Sigmoid colon (tissue), 7 donors: ENCODE measurements at regions of chr21 and their contacts with region 1.

Region 1: DNA sequence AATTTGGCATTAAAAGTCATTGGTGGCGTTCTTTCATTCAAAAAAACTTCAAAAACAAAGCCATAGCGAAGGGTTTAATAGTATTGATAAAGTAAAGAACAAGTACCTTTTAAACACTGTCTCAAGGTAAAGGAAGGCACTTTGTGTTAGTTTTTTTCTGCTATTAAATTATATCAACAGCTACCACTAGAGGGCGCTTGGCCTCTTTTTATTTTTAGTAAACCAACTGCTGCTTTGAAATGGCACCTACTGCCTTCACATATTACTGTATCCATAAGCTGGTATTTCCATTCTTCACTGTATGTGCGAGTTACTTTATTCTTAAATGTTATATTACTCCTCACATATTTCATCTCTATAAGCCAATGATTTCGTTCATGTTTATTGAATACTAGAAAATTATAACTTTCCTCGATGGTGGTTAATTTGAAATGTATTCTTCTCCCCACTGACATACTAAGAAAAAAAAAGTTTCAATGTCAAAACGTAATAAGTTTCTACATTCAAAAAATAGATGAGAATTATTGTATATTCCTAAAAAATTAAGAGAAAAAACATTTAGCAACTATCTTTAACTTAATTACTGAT is 125.7 kb upstream of the CXADR start:
- DNase-seq: no peak
- H3K4me3 ChIP-seq: no peak overlapping the region
- H3K27ac ChIP-seq: no peak overlapping the region
- H3K4me1 ChIP-seq: no peaks in the 10 kb centered on the region
- H3K27me3 ChIP-seq: peaks cover 0 to 5% (median 0%) of the 10 kb centered on the region in 3 donors
- CTCF ChIP-seq: peak; percentile 12 to 73 (median 65)
- EP300 ChIP-seq: no peak
- POLR2A ChIP-seq: no peak

Region 2: GRCh38 chr21:17414766-17415165 is 27.6 kb after region 1 on chr21:
- intact Hi-C with region 1: no loop called
- DNase-seq: no peak
- H3K4me3 ChIP-seq: no peak overlapping the region
- H3K27ac ChIP-seq: no peak overlapping the region
- H3K4me1 ChIP-seq: no peaks in the 10 kb centered on the region
- H3K27me3 ChIP-seq: no peaks in the 10 kb centered on the region
- CTCF ChIP-seq: no peak
- EP300 ChIP-seq: no peak
- POLR2A ChIP-seq: no peak

Region 3: GRCh38 chr21:17583898-17584297 is 196.8 kb after region 1 on chr21:
- intact Hi-C with region 1: loop called (anchors 2 kb)
- DNase-seq: no peak
- H3K4me3 ChIP-seq: no peak overlapping the region
- H3K27ac ChIP-seq: no peak overlapping the region
- H3K4me1 ChIP-seq: no peaks in the 10 kb centered on the region
- H3K27me3 ChIP-seq: no peaks in the 10 kb centered on the region
- CTCF ChIP-seq: no peak
- EP300 ChIP-seq: no peak
- POLR2A ChIP-seq: no peak